ENCODE measurements at regions of chr13 and their contacts with region 1.

Region 1: GRCh38 chr13:51825165-51825592 is 19.8 kb downstream of the TMEM272 start:
- DNase-seq: no peak
- H3K4me3 Mint-ChIP-seq: peak overlapping the region; percentile 77
- H3K27ac Mint-ChIP-seq: peak overlapping the region; percentile 98
- H3K4me1 Mint-ChIP-seq: peaks cover 84% of the 10 kb centered on the region
- H3K27me3 Mint-ChIP-seq: no peaks in the 10 kb centered on the region

Region 2: GRCh38 chr13:51746802-51747201 is 78.4 kb before region 1 on chr13:
- CTCF ChIA-PET with region 1: no interaction called
- intact Hi-C with region 1: no loop called
- DNase-seq: no peak
- H3K4me3 Mint-ChIP-seq: no peak overlapping the region
- H3K27ac Mint-ChIP-seq: no peak overlapping the region
- H3K4me1 Mint-ChIP-seq: no peaks in the 10 kb centered on the region
- H3K27me3 Mint-ChIP-seq: no peaks in the 10 kb centered on the region

Region 3: GRCh38 chr13:51764184-51765141 is 60.7 kb before region 1 on chr13:
- CTCF ChIA-PET with region 1: no interaction called
- intact Hi-C with region 1: loop called (anchors 1 kb)
- DNase-seq: peak; percentile 84
- H3K4me3 Mint-ChIP-seq: peak overlapping the region; percentile 73
- H3K27ac Mint-ChIP-seq: peak overlapping the region; percentile 82
- H3K4me1 Mint-ChIP-seq: peaks cover 35% of the 10 kb centered on the region
- H3K27me3 Mint-ChIP-seq: no peaks in the 10 kb centered on the region

Region 4: DNA sequence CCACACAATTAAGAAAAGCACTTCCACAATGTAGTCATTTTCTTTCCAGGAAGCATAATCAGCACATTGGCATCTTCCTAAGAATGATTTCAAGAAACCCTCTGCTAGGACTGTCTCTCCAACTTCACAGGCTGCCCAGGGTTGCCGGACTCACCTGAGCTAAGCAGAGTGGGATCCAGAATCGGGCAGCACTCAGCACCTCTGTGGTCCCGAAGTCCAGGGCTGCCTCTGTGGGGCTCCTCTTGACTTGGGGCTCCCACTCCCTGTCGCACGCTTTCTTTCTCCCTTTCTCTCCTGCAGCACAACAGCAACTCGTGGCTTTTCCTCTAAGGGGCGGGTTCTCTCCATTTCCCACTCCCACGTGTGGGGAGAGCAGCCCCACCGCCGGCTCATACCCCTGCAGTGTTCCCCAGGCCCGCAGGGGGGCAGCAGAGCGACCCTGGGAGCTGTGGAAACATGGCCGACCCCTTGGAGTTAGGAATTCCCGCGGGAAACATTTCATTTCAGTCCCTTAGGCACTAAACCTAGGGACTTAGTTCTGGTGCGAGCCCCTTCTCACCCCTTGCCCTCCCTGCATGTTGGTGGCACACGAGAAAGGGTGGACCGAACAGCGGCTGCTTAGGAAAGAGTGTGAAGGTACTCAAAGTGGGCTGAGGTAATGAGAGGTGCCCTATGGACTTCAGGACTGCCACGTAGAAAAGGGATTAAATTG is 19.8 kb after region 1 on chr13 and contains the start of gene TMEM272:
- CTCF ChIA-PET with region 1: interaction called, 11 read pairs
- intact Hi-C with region 1: no loop called
- DNase-seq: peak; percentile 63
- H3K4me3 Mint-ChIP-seq: peak within 1 kb of the TSS; percentile 47
- H3K27ac Mint-ChIP-seq: no peak within 1 kb of the TSS
- H3K4me1 Mint-ChIP-seq: peaks cover 17% of the 10 kb centered on the region
- H3K27me3 Mint-ChIP-seq: peaks cover 6% of the 10 kb centered on the region
- total RNA-seq, gene TMEM272: 0.41 to 0.42 TPM

Region 5: GRCh38 chr13:52011632-52012511 is 186.7 kb after region 1 on chr13 and contains the start of gene ALG11:
- CTCF ChIA-PET with region 1: no interaction called
- intact Hi-C with region 1: loop called (anchors 2 kb)
- DNase-seq: peak; percentile 100
- H3K4me3 Mint-ChIP-seq: peak within 1 kb of the TSS; percentile 98
- H3K27ac Mint-ChIP-seq: peak within 1 kb of the TSS; percentile 85
- H3K4me1 Mint-ChIP-seq: peaks cover 14% of the 10 kb centered on the region
- H3K27me3 Mint-ChIP-seq: peaks cover 10% of the 10 kb centered on the region
- total RNA-seq, gene ALG11: 12.6 to 15.6 TPM

Region 6: GRCh38 chr13:52652196-52652979 is 827.2 kb after region 1 on chr13 and contains the start of gene SUGT1:
- CTCF ChIA-PET with region 1: no interaction called
- intact Hi-C with region 1: loop called (anchors 2 kb)
- DNase-seq: peak; percentile 95
- H3K4me3 Mint-ChIP-seq: no peak within 1 kb of the TSS
- H3K27ac Mint-ChIP-seq: no peak within 1 kb of the TSS
- H3K4me1 Mint-ChIP-seq: peaks cover 14% of the 10 kb centered on the region
- H3K27me3 Mint-ChIP-seq: no peaks in the 10 kb centered on the region
- total RNA-seq, gene SUGT1: 42.7 to 44.1 TPM

Measured in activated naive CD4-positive, alpha-beta T cell treated with anti-CD3 and anti-CD28 coated beads for 36 hours (primary cell).